ENCODE measurements at regions of chr17 and their contacts with region 1.

Region 1: DNA sequence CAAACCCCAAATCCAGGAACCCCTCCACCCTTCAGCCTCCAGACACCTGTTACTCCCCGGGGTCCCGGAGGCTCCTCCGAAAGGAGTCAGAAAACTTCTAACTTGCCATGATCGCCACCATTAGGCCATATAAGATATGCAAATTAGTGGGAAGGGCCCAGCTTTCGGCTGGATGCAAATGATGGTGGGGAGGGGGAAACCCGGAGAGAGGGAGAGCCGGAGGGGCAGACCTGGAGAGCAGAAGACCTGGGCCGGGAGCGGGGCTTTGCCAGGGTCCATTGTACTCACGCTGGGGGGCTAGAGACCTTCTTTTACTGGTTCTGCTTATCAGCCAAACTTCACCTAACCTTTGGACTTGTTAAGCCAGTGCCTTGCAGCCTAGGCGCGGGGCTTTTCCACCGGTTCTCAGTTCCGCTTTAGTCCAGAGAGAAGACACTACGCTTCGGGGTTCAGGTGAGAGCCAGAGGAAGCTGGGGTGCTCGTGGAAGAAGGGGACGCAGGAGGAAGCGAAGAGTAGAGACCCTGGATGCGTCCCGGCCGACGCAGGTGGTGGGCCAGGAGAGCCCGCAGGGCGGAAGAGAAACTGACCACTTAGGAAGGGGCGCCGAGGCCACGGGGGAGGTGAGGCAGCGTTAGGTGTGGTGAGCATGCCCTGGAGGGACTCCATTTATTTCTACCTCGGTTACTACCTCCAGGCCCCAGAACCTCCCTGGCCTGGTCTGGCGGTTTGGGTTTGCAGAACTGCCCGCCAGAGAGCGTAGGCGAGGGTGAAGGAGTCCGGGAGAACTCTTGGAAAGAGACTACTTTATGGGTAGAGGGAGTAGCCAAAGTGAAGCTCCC is at the start of gene HNF1B:
- DNase-seq: peak in 1 of 9 donors; percentile 37
- ATAC-seq: peak; percentile 65
- H3K4me3 ChIP-seq: no peak within 1 kb of the TSS
- H3K4me3 Mint-ChIP-seq: peak within 1 kb of the TSS; percentile 23 to 85 (median 58)
- H3K27ac ChIP-seq: no peak within 1 kb of the TSS
- H3K27ac Mint-ChIP-seq: peak within 1 kb of the TSS in 1 of 9 donors; percentile 75
- H3K4me1 ChIP-seq: peaks cover 8 to 25% of the 10 kb centered on the region in 2 donors
- H3K4me1 Mint-ChIP-seq: peaks cover 14 to 34% (median 24%) of the 10 kb centered on the region in 7 donors
- H3K27me3 ChIP-seq: peaks cover 8 to 24% of the 10 kb centered on the region in 2 donors
- H3K27me3 Mint-ChIP-seq: peaks cover 55 to 84% (median 61%) of the 10 kb centered on the region in 5 donors
- total RNA-seq, gene HNF1B: 1.4 TPM in 1 of 5 experiments, not detected in the others

Region 2: DNA sequence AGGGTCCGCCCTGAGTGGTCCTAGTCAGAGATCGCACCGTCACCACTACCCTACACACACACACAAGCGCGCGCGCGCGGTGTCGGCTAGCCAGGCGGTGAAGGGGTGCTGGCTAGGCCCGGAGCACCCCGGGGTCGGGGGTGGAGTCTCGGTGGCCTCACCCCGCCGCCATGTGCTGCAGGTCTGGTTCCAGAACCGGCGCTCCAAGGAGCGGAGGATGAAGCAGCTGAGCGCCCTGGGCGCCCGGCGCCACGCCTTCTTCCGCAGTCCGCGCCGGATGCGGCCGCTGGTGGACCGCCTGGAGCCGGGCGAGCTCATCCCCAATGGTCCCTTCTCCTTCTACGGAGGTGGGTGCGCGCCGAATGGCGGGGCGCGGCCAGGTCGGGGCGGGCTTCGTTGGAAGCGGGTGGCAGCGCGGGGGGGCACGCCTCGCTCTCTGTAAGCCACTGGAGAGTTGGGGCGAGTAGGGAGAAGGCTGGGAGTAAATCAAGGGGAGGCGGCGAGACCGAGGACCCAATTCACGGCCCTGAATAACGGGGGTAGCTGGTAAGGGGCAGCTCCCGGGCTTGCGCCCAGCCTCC is 803.1 kb before region 1 on chr17:
- CTCF ChIA-PET with region 1: no interaction called
- POLR2A ChIA-PET with region 1: no interaction called
- intact Hi-C with region 1: loop called in 1 of 2 experiments (anchors 5 kb)
- DNase-seq: no peak
- ATAC-seq: peak; percentile 33
- H3K4me3 ChIP-seq: no peak overlapping the region
- H3K4me3 Mint-ChIP-seq: peak overlapping the region in 9 of 10 donors; percentile 12 to 50 (median 29)
- H3K27ac ChIP-seq: no peak overlapping the region
- H3K27ac Mint-ChIP-seq: peak overlapping the region in 2 of 9 donors; percentile 4 to 61
- H3K4me1 ChIP-seq: peaks cover 23% of the 10 kb centered on the region in 2 donors
- H3K4me1 Mint-ChIP-seq: peaks cover 19 to 56% (median 41%) of the 10 kb centered on the region in 7 donors
- H3K27me3 ChIP-seq: peaks cover 25 to 71% of the 10 kb centered on the region in 2 donors
- H3K27me3 Mint-ChIP-seq: peaks cover 70 to 86% (median 80%) of the 10 kb centered on the region in 5 donors

Region 3: GRCh38 chr17:37598145-37598544 is 147.0 kb before region 1 on chr17:
- CTCF ChIA-PET with region 1: no interaction called
- POLR2A ChIA-PET with region 1: no interaction called
- intact Hi-C with region 1: no loop called
- DNase-seq: no peak
- ATAC-seq: no peak
- H3K4me3 ChIP-seq: no peak overlapping the region
- H3K4me3 Mint-ChIP-seq: peak overlapping the region in 1 of 10 donors; percentile 11
- H3K27ac ChIP-seq: no peak overlapping the region
- H3K27ac Mint-ChIP-seq: peak overlapping the region in 6 of 9 donors; percentile 3 to 63 (median 52)
- H3K4me1 ChIP-seq: peaks cover 3 to 16% of the 10 kb centered on the region in 2 donors
- H3K4me1 Mint-ChIP-seq: peaks cover 36 to 79% (median 67%) of the 10 kb centered on the region in 7 donors
- H3K27me3 ChIP-seq: no peaks in the 10 kb centered on the region
- H3K27me3 Mint-ChIP-seq: no peaks in the 10 kb centered on the region

Region 4: DNA sequence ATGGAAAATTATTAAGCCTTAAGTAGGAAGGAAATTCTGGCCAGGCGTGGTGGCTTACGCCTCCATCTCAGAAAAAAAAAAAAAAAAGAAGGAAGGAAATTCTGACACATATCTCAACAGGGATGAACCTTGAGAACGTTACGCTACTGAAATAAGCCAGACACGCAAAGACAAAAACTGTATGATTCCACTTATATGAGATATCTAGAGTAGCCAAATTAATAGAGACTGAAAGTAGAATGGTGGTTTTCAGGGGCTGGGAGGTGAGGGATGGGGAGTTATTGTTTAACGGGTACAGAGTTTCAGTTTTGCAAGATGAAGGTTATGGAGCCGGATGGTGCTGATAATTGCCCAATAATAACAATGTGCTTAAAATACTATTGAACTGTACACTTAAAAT is 15.9 kb after region 1 on chr17:
- CTCF ChIA-PET with region 1: no interaction called
- POLR2A ChIA-PET with region 1: no interaction called
- intact Hi-C with region 1: loop called in 1 of 2 experiments (anchors 2 kb)
- DNase-seq: no peak
- ATAC-seq: no peak
- H3K4me3 ChIP-seq: no peak overlapping the region
- H3K4me3 Mint-ChIP-seq: peak overlapping the region in 1 of 10 donors; percentile 58
- H3K27ac ChIP-seq: no peak overlapping the region
- H3K27ac Mint-ChIP-seq: peak overlapping the region in 1 of 9 donors; percentile 35
- H3K4me1 ChIP-seq: peaks cover 8 to 13% of the 10 kb centered on the region in 2 donors
- H3K4me1 Mint-ChIP-seq: peaks cover 5 to 47% (median 12%) of the 10 kb centered on the region in 7 donors
- H3K27me3 ChIP-seq: peaks cover 0 to 5% of the 10 kb centered on the region in 2 donors
- H3K27me3 Mint-ChIP-seq: peaks cover 32 to 46% (median 36%) of the 10 kb centered on the region in 5 donors